ENCODE measurements at regions of chr15 and their contacts with region 1.

Region 1: DNA sequence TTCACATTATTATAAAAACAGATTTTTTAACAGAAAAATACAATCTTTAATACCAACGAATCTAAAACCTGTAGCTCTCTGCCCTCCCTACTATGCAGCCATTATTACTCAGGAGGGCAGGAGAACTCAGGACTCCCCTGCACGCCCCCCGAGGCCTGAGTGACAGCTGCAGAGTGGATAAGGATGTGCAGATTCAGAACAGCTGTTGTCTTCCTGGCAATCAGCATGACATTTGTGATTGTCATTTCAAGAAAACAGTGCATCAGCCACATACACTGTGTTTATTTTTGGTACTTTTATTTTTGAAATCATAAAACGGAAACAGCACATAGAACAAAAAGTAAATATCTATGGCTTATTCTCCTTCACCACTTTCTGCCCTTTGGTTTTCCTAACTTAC is 450.8 kb downstream of the OCA2 start:
- DNase-seq: no peak
- ATAC-seq: no peak

Region 2: DNA sequence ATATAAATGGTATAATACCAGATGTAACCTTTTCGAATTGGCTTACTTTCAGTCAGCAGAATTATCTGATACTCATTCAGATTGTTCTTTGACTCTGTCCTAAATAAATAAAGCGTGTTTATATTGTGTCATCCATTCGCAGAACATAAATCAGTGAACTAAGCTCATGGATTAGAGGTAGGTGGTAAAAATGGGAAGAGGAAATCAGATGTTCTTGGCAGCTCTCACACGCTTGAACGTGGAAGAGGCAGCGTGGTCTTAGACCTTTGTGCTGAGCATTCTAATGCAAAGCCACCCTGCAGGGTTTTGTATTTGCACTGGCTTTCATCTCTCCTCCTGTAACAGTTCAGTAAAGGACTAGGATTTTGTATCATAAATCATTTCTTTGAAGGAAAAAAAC is 235.9 kb before region 1 on chr15:
- intact Hi-C with region 1: no loop called
- DNase-seq: no peak
- ATAC-seq: no peak

Region 3: DNA sequence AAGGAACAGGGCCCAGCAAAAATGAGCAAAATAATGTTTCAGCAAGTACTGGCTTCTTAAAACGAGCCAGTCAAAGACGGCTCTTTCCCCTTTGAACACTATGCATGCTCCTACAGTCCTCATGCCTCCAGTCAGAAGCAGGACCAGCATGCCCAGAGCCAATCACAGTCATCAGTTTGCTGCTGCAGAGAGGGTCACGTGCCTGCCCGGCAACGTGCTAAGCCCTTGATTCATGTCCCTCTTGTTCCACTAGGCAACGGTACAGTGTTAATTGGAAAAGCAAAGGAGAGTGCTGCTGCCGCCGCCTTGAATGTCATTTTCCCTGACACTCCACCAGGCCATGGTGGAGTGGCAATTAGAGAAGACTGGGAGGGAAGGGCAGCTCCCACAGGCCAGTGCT is 49.3 kb before region 1 on chr15:
- intact Hi-C with region 1: loop called in 1 of 2 experiments (anchors 5 kb)
- DNase-seq: no peak
- ATAC-seq: no peak

Region 4: DNA sequence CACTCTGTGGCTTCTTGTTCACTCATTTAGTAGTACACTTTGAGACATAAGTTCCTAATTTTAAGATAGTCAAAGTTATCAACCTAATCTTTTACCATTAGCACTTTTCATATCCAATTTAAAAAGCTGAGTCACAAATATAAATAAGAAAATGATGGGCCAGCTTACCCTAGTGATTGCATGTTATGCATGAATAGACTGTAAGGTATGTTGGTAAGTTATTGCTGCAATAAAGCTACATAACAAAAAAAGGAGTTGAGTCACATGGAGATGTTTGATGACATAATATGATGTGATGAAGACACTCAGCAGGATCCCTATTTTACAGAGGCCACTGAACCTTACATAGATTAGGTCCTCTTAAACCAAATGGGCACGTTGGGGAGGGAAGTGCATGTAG is 289.5 kb after region 1 on chr15:
- intact Hi-C with region 1: no loop called
- DNase-seq: no peak
- ATAC-seq: no peak

Region 5: GRCh38 chr15:28075573-28075972 is 427.2 kb after region 1 on chr15:
- intact Hi-C with region 1: no loop called
- DNase-seq: no peak
- ATAC-seq: peak; percentile 80

Measured in left colon (tissue), 2 donors.